ENCODE measurements at regions of chr1 and their contacts with region 1.

Region 1: DNA sequence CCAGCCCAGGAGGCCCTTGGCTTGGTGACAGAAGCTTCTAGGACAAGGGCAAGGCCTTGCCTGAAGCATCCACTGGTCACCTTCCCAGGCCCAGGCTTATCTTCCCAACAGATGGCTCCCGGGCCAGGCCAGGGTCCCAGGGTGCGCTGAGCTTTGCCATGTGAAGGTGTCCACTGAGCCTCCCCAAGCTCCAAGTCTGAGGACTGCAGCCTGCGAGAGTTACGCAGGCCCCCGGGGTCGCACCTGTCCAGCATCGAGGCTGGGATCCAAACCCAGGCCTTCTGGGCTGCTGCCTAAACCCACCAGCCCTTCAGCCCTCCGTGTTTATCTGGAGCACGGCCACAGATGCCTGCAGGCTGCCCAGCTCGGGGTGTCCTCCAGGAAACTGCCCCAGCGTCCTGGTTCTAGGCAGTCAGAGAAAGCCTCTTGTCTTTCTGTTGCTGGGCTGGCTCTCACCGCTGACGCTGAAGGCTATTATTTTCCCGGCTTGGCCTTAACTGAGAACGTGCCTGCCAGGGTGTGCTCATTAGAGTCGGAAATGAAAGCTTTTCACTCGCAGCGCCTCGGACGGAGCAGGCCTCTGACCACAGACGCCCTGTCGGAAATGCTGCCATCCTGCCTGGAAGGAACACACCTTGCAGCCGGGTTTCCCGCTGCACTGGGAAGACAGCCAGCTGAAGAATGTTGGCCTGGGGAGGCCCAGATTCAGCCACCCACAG is 71.4 kb downstream of the MEGF6 start:
- DNase-seq: peak; percentile 29
- H3K4me3 ChIP-seq: no peak overlapping the region
- CTCF ChIP-seq: no peak

Region 2: DNA sequence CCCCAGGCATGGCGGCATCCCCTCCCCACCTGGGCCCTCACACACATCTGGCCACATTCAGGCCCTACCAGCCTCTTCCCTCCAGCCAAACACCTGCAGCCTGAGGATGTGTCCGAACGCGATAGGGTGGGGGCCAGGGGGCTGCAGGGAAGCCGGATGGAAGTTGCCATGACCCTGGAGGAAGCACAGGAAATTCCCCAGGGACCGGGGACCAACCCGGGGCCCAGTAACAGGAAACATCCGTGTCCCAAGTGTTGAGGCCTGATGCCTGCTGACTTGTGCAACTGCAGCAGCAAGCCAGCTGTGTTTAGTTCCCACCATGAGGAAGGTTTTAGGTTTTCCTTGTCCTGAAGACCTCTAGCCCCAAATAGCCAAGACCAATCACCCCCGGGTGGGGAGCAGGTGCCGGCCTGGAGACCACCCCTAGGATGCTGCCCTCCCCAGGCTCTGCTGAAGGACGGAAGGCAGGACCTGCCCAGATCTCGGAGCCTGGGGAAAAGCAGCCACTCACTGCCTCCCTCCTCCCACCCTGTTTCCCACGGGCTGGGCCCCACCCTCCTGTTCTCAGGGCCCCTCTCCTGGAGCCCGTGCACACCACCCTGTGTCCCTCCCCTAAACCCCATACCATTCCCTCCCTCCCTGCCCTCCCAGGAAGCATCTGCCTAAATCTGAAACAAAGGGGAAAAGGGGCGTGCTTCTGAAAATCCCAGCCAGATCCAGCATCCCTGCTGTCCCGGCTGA is 41.6 kb after region 1 on chr1:
- in situ Hi-C with region 1: loop called (anchors 5 kb)
- DNase-seq: no peak
- H3K4me3 ChIP-seq: no peak overlapping the region
- CTCF ChIP-seq: no peak

Measured in astrocyte of the cerebellum (primary cell).